ENCODE measurements at regions of chr17 and their contacts with region 1.

Region 1: GRCh38 chr17:55735731-55736405 is 13.2 kb upstream of the TMEM100 start:
- DNase-seq: peak; percentile 48 to 75 (median 70)
- H3K4me3 ChIP-seq: no peak overlapping the region
- H3K27ac ChIP-seq: no peak overlapping the region
- H3K4me1 ChIP-seq: peaks cover 0 to 3% (median 0%) of the 10 kb centered on the region in 4 experiments
- H3K27me3 ChIP-seq: peaks cover 0 to 1% (median 0%) of the 10 kb centered on the region in 5 experiments

Region 2: DNA sequence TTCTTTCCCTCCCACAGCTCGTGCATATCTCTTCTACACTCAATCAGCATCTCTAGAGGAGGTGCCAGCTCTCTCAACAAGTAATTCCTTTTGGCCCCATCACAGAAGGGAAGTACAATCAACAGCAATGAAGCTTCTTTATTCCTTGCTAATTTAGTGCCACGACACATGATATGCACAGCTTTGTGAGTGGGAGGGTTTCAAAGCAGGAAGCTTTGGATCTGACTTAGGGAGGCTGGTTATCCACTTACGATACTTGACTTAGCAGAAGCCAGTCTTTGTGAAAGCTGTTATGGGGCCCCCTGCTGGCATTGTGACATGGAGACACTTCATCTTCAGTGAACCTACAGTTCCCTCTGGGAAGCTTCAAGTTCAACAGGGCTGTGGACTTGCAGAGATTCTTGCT is 94.2 kb before region 1 on chr17:
- CTCF ChIA-PET with region 1: no interaction called
- POLR2A ChIA-PET with region 1: interaction called, 12 read pairs
- DNase-seq: peak; percentile 40 to 60 (median 57)
- H3K4me3 ChIP-seq: no peak overlapping the region
- H3K27ac ChIP-seq: no peak overlapping the region
- H3K4me1 ChIP-seq: peaks cover 0 to 22% (median 15%) of the 10 kb centered on the region in 4 experiments
- H3K27me3 ChIP-seq: no peaks in the 10 kb centered on the region

Region 3: GRCh38 chr17:55903028-55903690 is 167.3 kb after region 1 on chr17:
- CTCF ChIA-PET with region 1: no interaction called
- POLR2A ChIA-PET with region 1: no interaction called
- DNase-seq: no peak
- H3K4me3 ChIP-seq: no peak overlapping the region
- H3K27ac ChIP-seq: no peak overlapping the region
- H3K4me1 ChIP-seq: no peaks in the 10 kb centered on the region
- H3K27me3 ChIP-seq: no peaks in the 10 kb centered on the region

Measured in common myeloid progenitor, CD34-positive (primary cell).